ENCODE measurements at regions of chr16 and their contacts with region 1.

Region 1: DNA sequence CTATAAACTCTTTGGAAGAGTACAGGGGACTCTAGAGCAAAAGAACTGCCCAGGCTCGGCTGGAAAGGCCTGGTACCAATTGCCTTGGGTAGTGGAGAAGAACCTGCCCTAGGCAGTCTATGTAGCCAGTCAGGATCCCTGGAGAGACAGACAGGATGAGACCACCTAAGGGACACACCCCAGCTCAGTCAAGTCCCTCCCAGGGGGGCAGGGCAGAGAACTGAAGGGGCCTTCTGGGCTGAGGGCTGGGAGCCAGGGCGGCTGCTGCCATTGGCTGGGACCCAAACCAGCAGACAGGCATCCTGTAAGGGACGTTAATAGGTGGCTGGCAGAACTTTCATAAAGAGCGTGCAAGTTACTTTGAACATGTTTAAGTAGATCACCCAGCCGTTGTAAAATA is 12.8 kb upstream of the SLC38A8 start:
- DNase-seq: no peak
- H3K4me3 ChIP-seq: no peak overlapping the region
- H3K27ac ChIP-seq: no peak overlapping the region
- H3K4me1 ChIP-seq: no peaks in the 10 kb centered on the region
- H3K27me3 ChIP-seq: no peaks in the 10 kb centered on the region
- CTCF ChIP-seq: no peak

Region 2: GRCh38 chr16:83374979-83375378 is 680.4 kb before region 1 on chr16:
- CTCF ChIA-PET with region 1: interaction called, 15 read pairs
- POLR2A ChIA-PET with region 1: no interaction called
- intact Hi-C with region 1: no loop called
- DNase-seq: no peak
- H3K4me3 ChIP-seq: no peak overlapping the region
- H3K27ac ChIP-seq: no peak overlapping the region
- H3K4me1 ChIP-seq: no peaks in the 10 kb centered on the region
- H3K27me3 ChIP-seq: peaks cover 6% of the 10 kb centered on the region; the same call in 1 of the 2 replicates
- CTCF ChIP-seq: no peak

Region 3: DNA sequence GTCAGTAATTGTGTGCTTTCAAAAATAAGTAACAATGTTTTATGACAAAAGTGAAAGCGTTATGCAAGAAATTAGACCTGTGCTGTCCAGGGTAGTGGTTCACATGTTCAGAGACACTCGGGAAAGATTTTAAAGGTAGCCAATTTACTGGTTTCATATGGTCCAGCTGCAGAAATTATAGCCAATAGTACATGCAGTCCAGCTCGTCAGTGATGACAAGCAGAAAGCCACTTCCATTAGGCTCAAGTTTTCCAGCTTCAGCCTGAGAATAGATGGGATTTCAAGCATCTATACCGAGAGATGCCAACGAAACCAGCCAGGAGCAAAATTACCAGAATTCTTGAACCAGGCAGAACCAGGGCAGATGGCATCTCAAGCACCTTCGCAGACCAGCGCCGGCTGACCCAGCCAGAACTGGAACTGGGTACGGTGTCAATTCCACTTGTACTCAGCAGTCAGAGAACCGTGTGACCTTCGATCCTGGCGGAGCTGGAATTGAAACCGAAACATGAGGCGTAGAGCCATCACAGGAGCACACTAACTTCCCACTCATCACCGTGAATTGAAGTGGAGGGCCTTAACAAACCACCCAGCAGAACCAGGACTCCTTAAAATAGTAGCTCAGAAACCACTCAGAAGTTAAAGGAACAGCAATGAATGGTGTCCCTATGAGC is 455.4 kb before region 1 on chr16:
- CTCF ChIA-PET with region 1: no interaction called
- POLR2A ChIA-PET with region 1: interaction called, 14 read pairs
- intact Hi-C with region 1: no loop called
- DNase-seq: no peak
- H3K4me3 ChIP-seq: no peak overlapping the region
- H3K27ac ChIP-seq: no peak overlapping the region
- H3K4me1 ChIP-seq: no peaks in the 10 kb centered on the region
- H3K27me3 ChIP-seq: peaks cover 20% of the 10 kb centered on the region
- CTCF ChIP-seq: no peak

Region 4: DNA sequence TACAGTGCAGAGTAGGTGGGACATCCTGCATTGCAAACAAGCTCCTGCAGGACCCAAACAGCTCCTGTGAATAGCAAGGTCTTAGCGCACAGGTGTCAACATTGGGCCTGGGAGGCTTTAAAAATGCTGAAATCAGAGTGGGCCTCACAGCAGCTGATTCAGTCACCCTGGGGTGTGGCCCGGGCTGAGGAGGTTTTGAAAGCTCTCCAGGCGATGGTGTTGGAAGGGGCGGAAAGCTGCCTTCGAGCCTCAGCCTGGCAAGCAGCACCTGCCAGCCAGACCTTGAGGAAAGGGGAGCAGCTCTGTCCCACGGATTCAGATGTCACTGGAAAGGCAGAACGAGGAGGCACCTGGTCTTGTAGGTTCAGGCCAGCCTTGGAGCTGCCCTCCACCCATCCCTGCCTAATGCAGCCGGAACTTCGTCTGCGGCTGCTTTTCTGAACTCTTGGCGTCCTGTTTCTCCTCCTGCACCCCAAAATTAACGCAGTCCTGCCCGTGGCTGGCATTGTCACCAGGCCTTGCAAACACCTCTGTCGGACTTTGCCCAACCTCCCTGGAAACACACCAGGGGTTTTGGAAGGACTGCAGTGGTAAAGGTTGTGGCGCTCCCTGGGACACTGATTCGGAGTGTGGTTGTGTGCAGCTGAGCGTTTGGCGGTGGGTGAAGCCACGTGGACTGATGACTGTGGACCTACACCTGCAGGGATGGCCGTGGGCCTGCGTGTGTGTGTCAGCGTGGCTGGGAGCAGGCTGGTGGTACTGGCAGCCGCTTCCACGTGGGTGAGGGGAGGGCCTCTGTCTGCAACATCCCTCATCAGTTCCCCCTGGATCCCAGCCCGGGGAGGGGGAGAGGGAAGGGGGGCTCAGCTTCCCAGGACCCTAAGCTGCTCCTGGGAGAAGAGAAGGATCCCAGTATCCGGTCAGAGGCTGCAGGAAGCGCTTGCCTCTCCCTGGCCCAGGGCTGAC is 83.9 kb before region 1 on chr16:
- CTCF ChIA-PET with region 1: interaction called, 10 read pairs
- POLR2A ChIA-PET with region 1: no interaction called
- intact Hi-C with region 1: no loop called
- DNase-seq: no peak
- H3K4me3 ChIP-seq: no peak overlapping the region
- H3K27ac ChIP-seq: no peak overlapping the region
- H3K4me1 ChIP-seq: no peaks in the 10 kb centered on the region
- H3K27me3 ChIP-seq: no peaks in the 10 kb centered on the region
- CTCF ChIP-seq: no peak

Region 5: GRCh38 chr16:84007965-84008364 is 47.4 kb before region 1 on chr16:
- CTCF ChIA-PET with region 1: no interaction called
- POLR2A ChIA-PET with region 1: no interaction called
- intact Hi-C with region 1: no loop called
- DNase-seq: no peak
- H3K4me3 ChIP-seq: no peak overlapping the region
- H3K27ac ChIP-seq: no peak overlapping the region
- H3K4me1 ChIP-seq: no peaks in the 10 kb centered on the region
- H3K27me3 ChIP-seq: peaks cover 23% of the 10 kb centered on the region
- CTCF ChIP-seq: no peak

Region 6: DNA sequence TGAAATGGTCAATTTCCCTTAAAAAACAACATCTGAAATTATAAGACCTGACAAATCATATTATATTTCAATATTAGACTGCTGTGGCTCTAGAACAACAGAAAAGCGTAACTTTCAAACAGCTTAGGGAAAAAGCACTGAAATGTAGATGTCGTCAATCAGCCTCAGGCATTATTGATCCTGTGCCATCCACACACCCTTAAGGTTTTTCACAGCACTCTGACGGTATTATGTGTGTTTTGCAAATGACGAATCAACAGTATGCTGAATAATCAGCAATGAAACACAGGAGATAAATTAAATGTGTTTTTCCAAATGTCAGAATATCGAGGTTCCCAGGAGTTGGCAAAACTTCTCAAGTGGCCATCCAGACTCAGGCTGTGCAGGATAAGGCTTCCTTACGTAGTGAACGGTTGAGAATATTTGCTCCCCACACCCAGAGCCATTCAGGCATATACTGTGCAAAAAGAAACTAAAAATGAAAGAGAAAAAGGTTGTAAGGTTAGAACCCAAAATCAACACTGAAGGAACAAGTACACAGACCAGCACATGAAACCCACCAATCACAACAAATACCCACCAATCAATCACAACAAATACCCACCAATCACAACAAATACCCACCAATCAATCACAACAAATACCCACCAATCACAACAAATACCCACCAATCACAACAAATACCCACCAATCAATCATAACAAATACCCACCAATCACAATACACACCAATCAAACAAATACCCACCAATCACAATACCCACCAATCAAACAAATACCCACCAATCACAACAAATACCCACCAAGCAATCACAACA is 69.1 kb after region 1 on chr16:
- CTCF ChIA-PET with region 1: no interaction called
- POLR2A ChIA-PET with region 1: no interaction called
- intact Hi-C with region 1: no loop called
- DNase-seq: no peak
- H3K4me3 ChIP-seq: no peak overlapping the region
- H3K27ac ChIP-seq: no peak overlapping the region
- H3K4me1 ChIP-seq: peaks cover 12% of the 10 kb centered on the region
- H3K27me3 ChIP-seq: no peaks in the 10 kb centered on the region
- CTCF ChIP-seq: no peak

Region 7: DNA sequence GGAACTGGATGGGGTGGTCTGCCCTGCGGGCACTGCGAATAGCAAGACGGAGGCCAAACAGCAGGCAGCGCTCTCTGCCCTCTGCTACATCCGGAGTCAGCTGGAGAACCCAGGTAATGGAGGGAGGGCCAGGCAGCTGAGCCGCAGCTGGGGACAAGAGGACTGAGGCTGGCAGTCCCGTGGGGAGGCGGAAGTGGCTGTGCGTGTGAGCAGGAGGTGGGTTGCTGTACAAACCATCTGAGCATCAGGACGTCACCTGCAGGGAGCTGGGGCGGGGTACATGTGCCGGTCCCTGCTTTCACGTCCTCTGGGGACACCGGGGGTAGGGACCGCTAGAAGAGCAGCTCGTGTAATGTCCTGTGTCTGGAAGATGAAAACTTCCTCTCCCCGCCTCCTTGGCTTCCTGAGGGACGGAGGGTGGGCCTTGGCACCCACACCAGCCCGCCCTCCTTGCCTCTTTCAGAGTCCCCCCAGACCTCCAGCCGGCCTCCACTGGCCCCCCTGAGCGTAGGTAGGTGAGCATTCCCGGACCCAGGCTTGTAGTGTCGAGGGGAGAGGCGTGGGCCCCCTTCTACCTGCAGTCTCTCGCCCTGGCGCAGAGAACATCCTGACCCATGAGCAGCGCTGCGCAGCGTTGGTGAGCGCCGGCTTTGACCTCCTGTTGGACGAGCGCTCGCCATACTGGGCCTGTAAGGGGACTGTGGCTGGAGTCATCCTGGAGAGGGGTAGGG is 139.3 kb after region 1 on chr16:
- CTCF ChIA-PET with region 1: no interaction called
- POLR2A ChIA-PET with region 1: no interaction called
- intact Hi-C with region 1: no loop called
- DNase-seq: no peak
- H3K4me3 ChIP-seq: no peak overlapping the region
- H3K27ac ChIP-seq: no peak overlapping the region
- H3K4me1 ChIP-seq: no peaks in the 10 kb centered on the region
- H3K27me3 ChIP-seq: no peaks in the 10 kb centered on the region
- CTCF ChIP-seq: no peak

Measured in PC-9 (cell line).